ENCODE measurements at regions of chr16 and their contacts with region 1.

Region 1: GRCh38 chr16:3059000-3059722 is 6.3 kb upstream of the IL32 start:
- DNase-seq: peak; percentile 92
- ATAC-seq: peak; percentile 95

Region 2: GRCh38 chr16:3106205-3106928 is 47.2 kb after region 1 on chr16:
- intact Hi-C with region 1: loop called in 1 of 2 experiments (anchors 10 kb)
- DNase-seq: peak; percentile 92
- ATAC-seq: peak; percentile 97

Region 3: GRCh38 chr16:3129137-3130131 is 70.3 kb after region 1 on chr16:
- intact Hi-C with region 1: loop called in 1 of 2 experiments (anchors 2 kb)
- DNase-seq: peak; percentile 76
- ATAC-seq: peak; percentile 68 to 79

Region 4: DNA sequence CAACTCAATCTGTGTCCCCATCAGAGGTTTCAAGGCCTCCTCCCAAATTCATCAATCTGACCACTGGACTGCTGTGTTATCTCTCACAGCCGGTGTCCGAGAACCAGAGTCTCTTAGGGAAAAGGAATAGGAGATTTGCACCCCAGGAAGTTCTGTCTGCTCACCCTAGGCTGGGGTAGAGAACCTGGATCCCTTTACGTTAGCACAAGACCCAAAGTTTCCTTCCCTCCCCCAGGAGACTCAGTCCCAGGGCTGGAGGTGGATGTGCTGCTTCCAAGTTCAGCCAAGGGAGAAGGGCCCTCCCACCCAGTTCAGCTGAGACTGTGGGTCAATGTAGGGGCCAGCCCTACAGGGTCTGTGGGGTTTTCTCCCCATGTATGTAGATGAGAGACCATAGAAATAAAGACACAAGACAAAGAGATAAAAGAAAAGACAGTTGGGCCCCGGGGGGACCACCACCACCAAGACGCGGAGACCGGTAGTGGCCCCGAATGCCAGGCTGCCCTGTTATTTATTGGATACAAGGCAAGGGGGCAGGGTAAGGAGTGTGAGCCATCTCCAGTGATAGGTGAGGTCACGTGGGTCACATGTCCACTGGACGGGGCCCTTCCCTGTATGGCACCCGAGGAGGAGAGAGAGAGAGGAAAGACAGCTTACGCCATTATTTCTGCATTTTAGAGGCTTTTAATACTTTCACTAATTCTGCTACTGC is 106.1 kb after region 1 on chr16:
- intact Hi-C with region 1: loop called in 1 of 2 experiments (anchors 5 kb)
- DNase-seq: no peak
- ATAC-seq: no peak